Caco-2 (cell line): ENCODE measurements at regions of chr5 and their contacts with region 1.

Region 1: DNA sequence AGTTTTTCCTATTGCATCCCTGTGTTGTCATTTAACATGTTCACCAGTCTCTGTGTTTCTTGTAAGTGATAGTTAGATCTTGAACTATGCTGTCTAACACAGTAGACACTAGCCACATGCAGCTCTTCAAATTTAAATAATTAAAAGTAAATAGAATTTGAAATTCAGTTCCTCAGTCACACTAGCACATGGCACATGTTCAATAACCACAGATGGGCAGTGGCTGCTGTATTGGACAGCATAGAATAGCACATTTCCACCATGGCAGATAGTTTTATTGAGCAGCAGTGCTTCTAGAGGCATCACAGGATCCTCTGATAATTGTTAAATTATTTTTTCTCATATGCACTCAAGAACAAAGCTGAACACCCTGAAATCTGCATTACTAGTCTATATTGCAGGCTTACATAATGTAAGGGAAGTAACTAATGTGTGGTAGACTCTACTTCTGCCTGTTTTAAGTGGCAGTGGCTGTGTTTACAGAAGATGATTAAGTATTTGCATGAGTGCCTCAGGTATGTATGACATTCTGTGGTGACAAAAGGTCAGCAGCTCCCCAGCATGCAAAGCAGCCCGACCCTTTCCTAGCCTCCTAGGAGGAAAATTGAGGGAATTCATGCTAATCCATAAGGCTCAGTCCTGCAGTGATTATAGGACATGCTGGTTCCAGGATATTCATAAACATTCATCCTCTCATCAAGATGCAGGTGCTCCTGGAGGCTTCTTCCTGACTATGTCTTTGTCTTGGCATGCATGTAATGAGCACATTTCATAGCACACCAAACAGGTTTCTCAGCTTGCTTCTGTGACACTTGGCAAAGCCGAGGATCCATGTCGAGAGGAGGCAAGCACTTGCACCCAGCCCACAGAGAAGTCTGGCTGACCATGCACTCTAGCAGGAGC is 45.5 kb downstream of the SH3RF2 start:
- DNase-seq: peak; percentile 65 to 76
- H3K4me3 ChIP-seq: no peak overlapping the region
- H3K4me3 Mint-ChIP-seq: peak overlapping the region; percentile 27
- H3K27ac Mint-ChIP-seq: peak overlapping the region; percentile 74
- H3K4me1 ChIP-seq: peaks cover 70% of the 10 kb centered on the region
- H3K4me1 Mint-ChIP-seq: peaks cover 56% of the 10 kb centered on the region
- H3K27me3 ChIP-seq: no peaks in the 10 kb centered on the region
- H3K27me3 Mint-ChIP-seq: no peaks in the 10 kb centered on the region
- CTCF ChIP-seq: no peak

Region 2: GRCh38 chr5:145834917-145835847 is 146.7 kb before region 1 on chr5 and contains the start of gene PRELID2:
- CTCF ChIA-PET with region 1: no interaction called
- POLR2A ChIA-PET with region 1: no interaction called
- intact Hi-C with region 1: loop called (anchors 5 kb)
- DNase-seq: peak; percentile 96 to 97
- H3K4me3 ChIP-seq: peak within 1 kb of the TSS; percentile 82
- H3K4me3 Mint-ChIP-seq: peak within 1 kb of the TSS; percentile 72
- H3K27ac Mint-ChIP-seq: peak within 1 kb of the TSS; percentile 79
- H3K4me1 ChIP-seq: peaks cover 19% of the 10 kb centered on the region
- H3K4me1 Mint-ChIP-seq: peaks cover 23% of the 10 kb centered on the region
- H3K27me3 ChIP-seq: no peaks in the 10 kb centered on the region
- H3K27me3 Mint-ChIP-seq: no peaks in the 10 kb centered on the region
- CTCF ChIP-seq: peak; percentile 23 to 24
- total RNA-seq, gene PRELID2: 26.0 and 28.7 TPM in 2 replicates

Region 3: GRCh38 chr5:145925353-145925752 is 56.5 kb before region 1 on chr5:
- CTCF ChIA-PET with region 1: no interaction called
- POLR2A ChIA-PET with region 1: no interaction called
- intact Hi-C with region 1: loop called (anchors 1 kb)
- DNase-seq: peak in 1 of 2 experiments; percentile 52
- H3K4me3 ChIP-seq: no peak overlapping the region
- H3K4me3 Mint-ChIP-seq: no peak overlapping the region
- H3K27ac Mint-ChIP-seq: peak overlapping the region; percentile 73
- H3K4me1 ChIP-seq: peaks cover 30% of the 10 kb centered on the region
- H3K4me1 Mint-ChIP-seq: peaks cover 31% of the 10 kb centered on the region
- H3K27me3 ChIP-seq: no peaks in the 10 kb centered on the region
- H3K27me3 Mint-ChIP-seq: no peaks in the 10 kb centered on the region
- CTCF ChIP-seq: no peak

Region 4: DNA sequence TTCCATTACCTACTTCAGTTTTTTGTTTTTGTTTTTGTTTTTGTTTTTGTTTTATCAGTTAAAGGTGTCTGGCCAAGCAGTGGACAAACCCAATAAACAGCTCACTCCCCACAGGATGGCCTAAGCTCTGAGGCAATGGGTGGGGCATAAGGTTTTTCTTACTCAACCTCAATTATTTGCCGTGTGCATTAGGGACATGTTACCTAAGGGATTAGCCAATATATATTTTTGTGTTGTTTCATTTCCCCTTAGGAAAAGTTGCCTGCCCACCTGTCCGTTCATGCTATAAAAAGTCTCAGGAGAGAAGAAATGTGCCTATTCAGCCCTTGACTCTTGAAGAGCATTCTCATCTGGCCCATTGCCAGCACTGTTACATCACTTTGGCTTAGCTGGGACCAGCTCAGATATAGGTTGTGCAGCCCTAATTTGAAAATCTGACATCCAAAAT is 38.1 kb before region 1 on chr5:
- CTCF ChIA-PET with region 1: interaction called, 14 read pairs
- POLR2A ChIA-PET with region 1: interaction called, 11 read pairs
- intact Hi-C with region 1: loop called (anchors 1 kb)
- DNase-seq: no peak
- H3K4me3 ChIP-seq: no peak overlapping the region
- H3K4me3 Mint-ChIP-seq: no peak overlapping the region
- H3K27ac Mint-ChIP-seq: no peak overlapping the region
- H3K4me1 ChIP-seq: peaks cover 80% of the 10 kb centered on the region
- H3K4me1 Mint-ChIP-seq: peaks cover 67% of the 10 kb centered on the region
- H3K27me3 ChIP-seq: no peaks in the 10 kb centered on the region
- H3K27me3 Mint-ChIP-seq: no peaks in the 10 kb centered on the region
- CTCF ChIP-seq: no peak

Region 5: DNA sequence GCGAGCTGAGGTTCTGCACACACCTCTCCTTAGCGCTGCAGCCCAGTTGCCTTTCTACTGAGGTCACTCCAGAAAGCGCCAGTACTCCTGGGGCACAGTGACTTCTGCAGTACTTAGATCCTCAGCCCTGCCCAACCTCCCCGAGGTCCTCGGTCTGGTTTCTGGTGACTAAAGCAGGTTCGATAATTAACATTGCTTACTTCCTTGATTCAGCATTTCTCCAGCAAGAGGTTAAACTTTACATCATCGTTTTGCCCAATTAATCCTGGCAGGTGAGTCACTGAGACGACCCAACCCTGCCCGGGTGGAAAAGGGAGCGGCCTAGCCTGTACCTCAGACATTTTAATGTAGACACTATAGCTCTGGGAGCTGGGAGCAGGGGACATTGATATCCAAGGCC is 45.9 kb after region 1 on chr5:
- CTCF ChIA-PET with region 1: interaction called, 3 read pairs
- POLR2A ChIA-PET with region 1: interaction called, 3 read pairs
- intact Hi-C with region 1: loop called (anchors 1 kb)
- DNase-seq: peak in 1 of 2 experiments; percentile 28
- H3K4me3 ChIP-seq: no peak overlapping the region
- H3K4me3 Mint-ChIP-seq: no peak overlapping the region
- H3K27ac Mint-ChIP-seq: peak overlapping the region; percentile 66
- H3K4me1 ChIP-seq: peaks cover 68% of the 10 kb centered on the region
- H3K4me1 Mint-ChIP-seq: peaks cover 59% of the 10 kb centered on the region
- H3K27me3 ChIP-seq: no peaks in the 10 kb centered on the region
- H3K27me3 Mint-ChIP-seq: no peaks in the 10 kb centered on the region
- CTCF ChIP-seq: no peak

Region 6: GRCh38 chr5:146049014-146049703 is 67.3 kb after region 1 on chr5:
- CTCF ChIA-PET with region 1: no interaction called
- POLR2A ChIA-PET with region 1: no interaction called
- intact Hi-C with region 1: loop called (anchors 2 kb)
- DNase-seq: peak; percentile 58 to 75
- H3K4me3 ChIP-seq: no peak overlapping the region
- H3K4me3 Mint-ChIP-seq: no peak overlapping the region
- H3K27ac Mint-ChIP-seq: peak overlapping the region; percentile 14
- H3K4me1 ChIP-seq: peaks cover 30% of the 10 kb centered on the region
- H3K4me1 Mint-ChIP-seq: peaks cover 38% of the 10 kb centered on the region
- H3K27me3 ChIP-seq: no peaks in the 10 kb centered on the region
- H3K27me3 Mint-ChIP-seq: no peaks in the 10 kb centered on the region
- CTCF ChIP-seq: peak; percentile 80

Region 7: GRCh38 chr5:146103594-146103993 is 121.8 kb after region 1 on chr5:
- CTCF ChIA-PET with region 1: no interaction called
- POLR2A ChIA-PET with region 1: no interaction called
- intact Hi-C with region 1: no loop called
- DNase-seq: no peak
- H3K4me3 ChIP-seq: no peak overlapping the region
- H3K4me3 Mint-ChIP-seq: no peak overlapping the region
- H3K27ac Mint-ChIP-seq: no peak overlapping the region
- H3K4me1 ChIP-seq: no peaks in the 10 kb centered on the region
- H3K4me1 Mint-ChIP-seq: no peaks in the 10 kb centered on the region
- H3K27me3 ChIP-seq: no peaks in the 10 kb centered on the region
- H3K27me3 Mint-ChIP-seq: no peaks in the 10 kb centered on the region
- CTCF ChIP-seq: no peak

Region 8: DNA sequence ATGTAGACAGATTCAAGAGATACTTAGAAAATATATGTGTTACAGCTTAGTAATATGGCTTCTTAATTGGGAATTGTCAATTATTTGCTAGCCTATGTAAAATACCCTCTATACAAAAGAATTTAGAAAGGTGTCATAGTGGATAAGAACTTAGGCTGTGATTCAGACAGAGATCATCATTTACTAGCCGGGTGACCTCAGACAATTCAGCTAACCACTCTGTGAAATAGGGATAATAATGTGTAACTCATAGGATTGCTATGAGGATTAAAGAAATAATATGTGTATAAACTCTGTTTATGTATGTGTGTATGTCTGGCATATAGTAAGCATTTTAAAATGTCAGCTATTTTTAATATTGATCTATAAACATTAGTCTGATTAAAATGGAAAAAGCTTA is 206.5 kb after region 1 on chr5:
- CTCF ChIA-PET with region 1: no interaction called
- POLR2A ChIA-PET with region 1: no interaction called
- intact Hi-C with region 1: no loop called
- DNase-seq: no peak
- H3K4me3 ChIP-seq: no peak overlapping the region
- H3K4me3 Mint-ChIP-seq: no peak overlapping the region
- H3K27ac Mint-ChIP-seq: no peak overlapping the region
- H3K4me1 ChIP-seq: no peaks in the 10 kb centered on the region
- H3K4me1 Mint-ChIP-seq: peaks cover 10% of the 10 kb centered on the region
- H3K27me3 ChIP-seq: no peaks in the 10 kb centered on the region
- H3K27me3 Mint-ChIP-seq: no peaks in the 10 kb centered on the region
- CTCF ChIP-seq: no peak